A549 (cell line): ENCODE measurements at regions of chr3 and their contacts with region 1.

Region 1: DNA sequence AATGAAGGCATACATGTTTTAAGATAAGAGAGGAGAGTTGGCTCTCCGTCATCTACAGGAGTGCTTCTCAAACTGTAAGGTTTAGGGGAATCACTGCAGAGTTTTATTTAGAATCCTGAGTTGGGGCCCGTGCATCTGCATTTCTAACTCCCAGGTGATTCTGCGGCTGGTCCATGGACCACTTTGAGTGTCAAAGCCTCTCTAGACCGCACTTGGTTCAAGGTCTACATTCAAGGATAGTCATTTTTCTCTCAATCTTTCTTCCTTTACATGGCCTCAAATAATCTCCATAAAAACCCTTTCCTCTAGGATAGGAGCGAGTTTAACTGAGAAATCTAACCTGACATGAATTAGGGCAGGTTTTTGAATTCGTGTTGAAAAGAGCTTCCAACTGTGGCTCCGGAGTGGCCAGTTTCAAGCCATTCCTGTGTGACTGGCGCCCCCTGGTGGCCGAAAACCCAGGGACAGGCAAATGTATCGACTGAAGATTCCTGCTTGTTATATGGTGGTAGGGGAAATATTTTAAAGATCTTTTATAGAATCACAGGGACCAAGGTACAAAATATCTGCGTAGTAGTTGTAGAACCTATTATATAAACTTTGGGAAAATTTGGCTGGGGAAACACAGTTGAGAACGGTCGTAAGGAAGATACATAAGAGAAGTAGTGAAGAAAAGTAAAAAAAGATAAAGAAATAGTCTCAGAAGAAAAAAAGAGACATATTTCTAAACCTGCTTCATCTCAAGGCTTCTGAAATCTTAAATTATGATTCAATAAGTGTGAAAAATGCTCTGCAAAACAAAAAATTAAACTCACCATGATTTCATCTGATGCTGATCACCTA is 11.9 kb downstream of the GABRR3 start:
- DNase-seq: peak; percentile 43 to 79
- ATAC-seq: peak; percentile 91 to 96
- H3K4me3 ChIP-seq: no peak overlapping the region
- H3K27ac ChIP-seq: no peak overlapping the region
- H3K4me1 ChIP-seq: no peaks in the 10 kb centered on the region
- CTCF ChIP-seq: peak; percentile 96
- EP300 ChIP-seq: no peak
- POLR2A ChIP-seq: no peak
- RAD21 ChIP-seq: peak; percentile 96 to 99

Region 2: GRCh38 chr3:97432914-97433313 is 590.3 kb before region 1 on chr3:
- CTCF ChIA-PET with region 1: no interaction called
- POLR2A ChIA-PET with region 1: no interaction called
- DNase-seq: no peak
- ATAC-seq: no peak
- H3K4me3 ChIP-seq: no peak overlapping the region
- H3K27ac ChIP-seq: no peak overlapping the region
- H3K4me1 ChIP-seq: no peaks in the 10 kb centered on the region
- CTCF ChIP-seq: no peak
- EP300 ChIP-seq: no peak
- POLR2A ChIP-seq: no peak
- RAD21 ChIP-seq: no peak

Region 3: DNA sequence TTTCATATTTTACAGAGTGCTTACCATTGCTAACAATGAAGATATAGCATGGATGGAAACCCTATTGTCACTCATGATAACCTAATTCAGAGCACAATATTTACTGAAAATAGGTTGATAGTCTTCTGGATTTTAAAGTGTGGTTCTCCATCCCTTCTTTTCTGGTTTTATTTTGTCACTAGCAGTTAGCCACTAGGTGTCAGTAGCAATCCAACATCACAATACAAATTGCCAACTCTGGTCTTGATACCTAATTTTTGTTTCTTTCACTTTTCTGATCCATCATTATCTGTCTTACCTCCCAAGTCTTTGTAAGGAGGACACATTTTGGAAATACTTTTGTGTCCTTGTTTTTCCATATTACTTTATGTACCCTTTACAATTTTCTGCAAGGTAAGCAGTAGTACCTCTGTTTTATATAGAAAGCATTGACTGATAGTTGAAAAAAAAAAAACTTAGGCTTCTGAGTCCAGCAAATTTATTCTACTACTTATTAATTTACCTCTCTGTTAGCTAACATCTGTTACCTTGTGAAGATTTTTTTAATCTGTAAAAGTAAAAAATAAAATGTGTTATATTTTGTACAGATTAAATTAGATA is 229.7 kb before region 1 on chr3:
- CTCF ChIA-PET with region 1: interaction called, 78 read pairs
- POLR2A ChIA-PET with region 1: no interaction called
- DNase-seq: peak; percentile 13 to 60
- ATAC-seq: peak in 1 of 2 experiments; percentile 68; a peak in 3 of 6 replicates
- H3K4me3 ChIP-seq: no peak overlapping the region
- H3K27ac ChIP-seq: no peak overlapping the region
- H3K4me1 ChIP-seq: no peaks in the 10 kb centered on the region
- CTCF ChIP-seq: peak; percentile 90
- EP300 ChIP-seq: no peak
- POLR2A ChIP-seq: no peak
- RAD21 ChIP-seq: peak; percentile 84 to 86

Region 4: DNA sequence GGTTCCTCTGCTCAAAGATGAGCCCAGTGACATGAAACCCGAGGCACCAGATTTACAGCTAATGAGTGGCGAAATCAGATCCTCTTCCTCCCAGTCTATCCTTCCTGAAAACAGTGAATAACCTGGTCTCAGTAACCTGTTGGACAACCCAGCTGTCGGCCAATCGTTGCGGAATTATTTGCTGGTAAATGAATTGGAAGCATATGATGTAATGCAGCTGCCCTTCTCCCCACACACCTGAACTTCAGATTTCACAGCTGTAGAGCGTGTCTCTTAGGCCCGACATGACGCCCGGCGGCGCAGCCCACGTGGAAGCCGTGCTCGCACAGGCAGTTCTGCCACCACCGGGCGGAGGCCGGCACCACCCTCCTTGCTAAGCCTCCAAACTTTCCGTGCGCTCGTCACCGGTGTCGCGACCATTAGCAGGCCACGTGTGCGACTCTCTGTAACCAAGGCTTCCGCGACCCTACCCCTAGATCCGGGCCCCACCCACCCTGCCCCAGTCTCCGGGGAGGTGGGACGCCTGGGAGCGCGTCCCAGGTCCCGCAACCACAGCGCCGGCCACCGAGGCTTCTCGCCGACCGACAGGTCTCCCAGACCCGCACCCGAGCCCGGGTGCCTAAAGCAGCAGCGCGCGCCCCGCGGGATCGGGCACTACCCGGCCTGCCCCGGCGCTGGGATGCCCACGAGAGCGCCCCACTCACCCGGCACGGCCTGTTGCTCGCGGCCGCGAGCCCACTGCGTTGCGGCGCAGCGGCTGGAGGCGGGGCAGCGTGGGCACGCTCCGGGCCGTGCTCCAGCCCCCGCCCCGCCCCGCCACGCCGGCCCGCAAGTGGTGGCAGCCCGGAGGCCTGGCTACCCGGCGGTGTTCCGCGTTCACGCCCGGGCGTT is 51.3 kb before region 1 on chr3 and contains the start of gene RIOX2:
- CTCF ChIA-PET with region 1: interaction called, 12 read pairs
- POLR2A ChIA-PET with region 1: no interaction called
- DNase-seq: peak; percentile 64 to 79
- ATAC-seq: peak; percentile 97 to 98
- H3K4me3 ChIP-seq: peak within 1 kb of the TSS; percentile 64
- H3K27ac ChIP-seq: peak within 1 kb of the TSS; percentile 84 to 95
- H3K4me1 ChIP-seq: peaks cover 17% of the 10 kb centered on the region; the same call in 2 of the 3 replicates
- CTCF ChIP-seq: no peak
- EP300 ChIP-seq: no peak
- POLR2A ChIP-seq: peak; percentile 89
- RAD21 ChIP-seq: no peak
- polyA plus RNA-seq, gene RIOX2: 42.4 and 49.6 TPM in 2 replicates